Cardiac septum (tissue), 1 donor: ENCODE measurements at regions of chr7 and their contacts with region 1.

Region 1: DNA sequence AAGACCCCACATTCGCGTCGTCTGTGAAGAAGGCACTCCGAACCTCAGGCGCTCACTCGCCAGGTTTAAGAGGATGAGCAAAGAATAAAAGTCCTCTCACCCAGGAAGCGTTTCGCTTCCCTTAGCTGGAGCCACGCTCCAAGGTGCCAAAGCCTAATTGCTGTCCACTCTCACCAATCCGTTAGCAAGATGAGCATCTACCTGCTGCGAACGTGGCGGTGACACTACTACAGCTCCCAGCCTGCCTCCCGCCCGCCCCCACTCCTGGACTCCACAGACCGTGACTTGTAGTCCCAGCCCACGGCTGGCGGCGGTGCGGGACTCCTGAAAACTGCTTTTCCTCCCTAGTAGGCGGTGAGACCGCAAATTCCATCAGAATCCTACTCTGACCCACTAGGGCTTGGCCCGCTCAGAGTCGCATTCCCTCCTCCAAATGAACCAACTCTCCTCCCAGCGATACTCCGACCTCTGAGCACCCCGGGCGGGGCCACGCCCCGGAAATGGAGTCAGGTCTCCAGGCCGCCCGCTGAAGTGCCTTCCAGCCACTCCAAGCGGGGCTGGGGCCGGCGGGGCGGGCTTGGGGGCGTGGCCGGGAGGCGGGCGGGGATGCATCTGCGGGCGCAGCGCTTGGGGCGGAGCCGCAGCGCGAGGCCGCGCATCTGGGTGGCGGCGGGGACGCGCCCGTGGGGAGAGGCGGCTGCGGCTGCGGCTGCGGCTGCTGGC is 521 bp upstream of the PTPN12 start:
- DNase-seq: peak; percentile 100

Region 2: DNA sequence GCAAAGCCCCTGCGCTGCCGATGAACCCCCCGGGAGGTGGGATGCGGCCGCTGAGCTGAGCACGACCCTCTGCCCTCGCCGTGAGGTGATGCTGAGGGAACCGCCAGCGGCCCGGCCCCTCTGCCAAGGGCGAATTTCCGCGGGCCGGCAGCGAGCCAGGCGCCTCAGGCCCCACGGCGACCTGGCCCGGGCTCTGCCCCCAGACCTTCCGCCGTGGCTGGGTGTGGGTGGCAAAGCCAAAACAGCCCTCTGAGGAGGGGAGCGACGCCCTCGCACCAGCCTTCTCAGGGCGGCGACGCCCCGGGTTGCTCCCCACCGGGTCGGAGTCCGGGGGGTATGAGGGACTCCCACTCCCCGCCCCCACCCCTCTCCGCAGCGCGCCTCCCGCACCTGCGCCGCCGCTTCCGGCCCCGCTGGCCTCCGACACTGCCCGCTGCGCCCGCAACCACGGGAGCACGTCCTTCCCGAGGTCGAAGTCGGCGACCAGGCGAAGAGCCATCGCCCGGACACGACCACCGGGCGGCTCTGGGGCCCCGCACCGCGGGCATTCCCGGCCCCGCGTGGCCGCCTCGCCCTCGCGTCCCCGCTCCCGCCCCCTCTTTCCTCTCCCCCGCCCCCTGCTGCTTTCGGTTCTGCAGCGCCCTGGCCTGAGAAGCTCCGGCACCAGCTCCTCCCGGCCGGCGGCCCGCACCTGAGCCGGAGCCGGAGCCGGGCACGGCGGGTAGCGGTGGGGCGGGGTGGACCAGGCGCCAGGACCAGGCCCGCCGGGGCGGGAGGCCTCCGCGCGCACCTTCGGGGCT is 120.6 kb before region 1 on chr7 and contains the start of gene GSAP:
- intact Hi-C with region 1: loop called (anchors 5 kb)
- DNase-seq: peak; percentile 91
- total RNA-seq, gene GSAP: 7.2 TPM

Region 3: GRCh38 chr7:77550586-77550985 is 14.0 kb after region 1 on chr7:
- intact Hi-C with region 1: no loop called
- DNase-seq: no peak

Region 4: DNA sequence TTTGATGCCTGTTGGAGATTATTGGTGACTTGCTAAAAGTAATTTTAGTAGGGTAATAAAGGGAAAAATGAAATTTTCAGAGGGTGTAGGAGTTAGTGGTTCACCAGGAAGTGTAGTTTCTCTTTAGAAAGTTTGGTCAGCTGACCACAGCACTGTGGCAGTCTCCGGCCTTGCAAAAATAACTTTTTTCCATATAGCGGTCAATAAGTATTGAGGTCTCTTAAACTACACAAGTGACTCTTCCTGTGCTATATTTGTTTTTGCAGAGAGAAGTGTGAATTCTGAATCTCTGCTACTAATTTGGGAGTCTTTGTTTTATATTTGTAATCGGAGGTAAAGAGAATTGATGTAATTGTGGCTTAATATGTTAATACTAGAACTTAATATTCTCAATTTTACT is 24.8 kb after region 1 on chr7:
- intact Hi-C with region 1: no loop called
- DNase-seq: no peak

Region 5: DNA sequence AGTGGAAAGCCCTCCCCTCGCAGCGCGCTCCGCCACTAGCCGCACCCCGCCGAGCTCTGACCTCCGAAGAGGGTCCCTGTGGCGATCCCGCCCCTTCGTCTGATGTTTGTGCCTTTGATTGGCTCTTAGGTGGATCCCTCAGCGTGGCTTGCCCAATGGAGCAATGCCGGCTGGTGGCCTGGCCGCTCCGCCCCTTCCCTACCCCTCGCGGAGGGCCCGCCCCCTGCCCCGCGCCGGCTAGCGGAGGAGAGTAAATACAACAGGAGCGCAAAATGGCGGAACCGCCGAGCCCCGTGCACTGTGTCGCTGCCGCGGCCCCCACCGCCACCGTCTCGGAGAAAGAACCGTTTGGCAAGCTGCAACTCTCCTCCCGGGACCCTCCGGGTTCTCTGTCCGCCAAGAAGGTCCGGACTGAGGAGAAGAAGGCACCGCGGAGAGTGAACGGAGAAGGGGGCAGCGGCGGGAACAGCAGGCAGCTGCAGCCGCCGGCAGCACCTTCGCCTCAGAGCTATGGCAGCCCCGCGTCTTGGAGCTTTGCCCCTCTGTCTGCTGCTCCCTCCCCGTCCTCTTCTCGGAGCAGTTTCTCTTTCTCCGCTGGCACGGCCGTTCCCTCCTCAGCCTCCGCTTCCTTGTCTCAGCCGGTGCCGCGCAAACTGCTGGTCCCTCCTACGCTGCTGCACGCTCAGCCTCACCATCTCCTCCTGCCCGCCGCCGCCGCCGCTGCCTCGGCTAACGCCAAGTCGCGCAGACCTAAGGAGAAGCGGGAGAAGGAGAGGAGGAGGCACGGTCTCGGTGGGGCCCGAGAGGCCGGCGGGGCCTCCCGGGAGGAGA is 159.8 kb after region 1 on chr7 and contains the start of gene RSBN1L:
- intact Hi-C with region 1: loop called (anchors 5 kb)
- DNase-seq: peak; percentile 100
- total RNA-seq, gene RSBN1L: 9.4 TPM